Mammary epithelial cell (primary cell): ENCODE measurements at regions of chr14 and their contacts with region 1.

Region 1: DNA sequence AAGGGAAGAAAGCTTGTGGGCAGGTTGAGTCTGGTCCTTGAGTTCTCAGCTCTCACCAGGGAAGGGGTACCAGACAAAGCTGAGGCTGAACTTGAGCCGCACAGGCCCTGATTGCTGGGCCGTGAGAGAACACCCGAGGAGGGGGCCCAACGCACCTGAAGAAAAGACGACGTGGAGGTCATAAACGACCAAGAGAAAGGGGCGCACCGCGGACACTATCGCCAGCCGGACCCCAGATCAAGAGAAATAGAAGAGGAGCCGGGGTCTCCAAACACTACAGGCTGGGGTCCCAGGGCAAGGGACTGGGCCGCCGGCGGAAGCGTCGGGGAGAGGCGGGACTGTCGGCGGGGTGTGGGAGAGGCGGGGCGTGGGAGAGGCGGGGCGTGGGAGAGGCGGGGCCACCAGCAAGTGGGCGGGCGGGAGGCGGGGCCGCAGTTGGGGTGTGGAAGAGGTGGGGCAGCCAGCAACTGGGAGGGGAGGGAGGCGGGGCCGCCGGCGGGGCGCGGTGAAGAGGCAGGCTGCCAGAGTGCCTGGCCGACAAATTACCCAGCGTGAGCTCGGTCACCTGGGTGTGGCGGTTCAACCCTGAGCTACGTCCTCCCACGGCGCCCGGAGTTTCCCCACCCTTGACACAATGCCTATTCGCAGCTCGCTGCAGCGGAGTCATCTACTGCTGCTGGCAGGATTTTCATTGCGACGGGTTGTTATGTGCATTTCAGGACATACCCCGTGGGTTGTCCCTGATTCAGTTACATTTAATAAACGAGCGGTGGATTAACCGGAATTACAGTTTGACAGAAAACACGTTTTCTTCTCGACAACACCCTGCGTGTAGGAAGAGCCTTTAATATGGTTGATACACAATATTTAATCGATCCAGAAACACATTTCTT is 15.5 kb upstream of the NEMF start:
- DNase-seq: peak; percentile 97
- H3K4me3 ChIP-seq: peak overlapping the region; percentile 59 to 70 (median 60)
- H3K27ac ChIP-seq: peak overlapping the region; percentile 81
- H3K4me1 ChIP-seq: peaks cover 17% of the 10 kb centered on the region
- H3K27me3 ChIP-seq: no peaks in the 10 kb centered on the region
- CTCF ChIP-seq: no peak

Region 2: GRCh38 chr14:49820176-49820575 is 47.9 kb before region 1 on chr14:
- CTCF ChIA-PET with region 1: no interaction called
- dilution Hi-C with region 1: no loop called
- in situ Hi-C with region 1: no loop called
- intact Hi-C with region 1: no loop called
- DNase-seq: no peak
- H3K4me3 ChIP-seq: no peak overlapping the region
- H3K27ac ChIP-seq: no peak overlapping the region
- H3K4me1 ChIP-seq: no peaks in the 10 kb centered on the region
- H3K27me3 ChIP-seq: no peaks in the 10 kb centered on the region
- CTCF ChIP-seq: no peak

Region 3: DNA sequence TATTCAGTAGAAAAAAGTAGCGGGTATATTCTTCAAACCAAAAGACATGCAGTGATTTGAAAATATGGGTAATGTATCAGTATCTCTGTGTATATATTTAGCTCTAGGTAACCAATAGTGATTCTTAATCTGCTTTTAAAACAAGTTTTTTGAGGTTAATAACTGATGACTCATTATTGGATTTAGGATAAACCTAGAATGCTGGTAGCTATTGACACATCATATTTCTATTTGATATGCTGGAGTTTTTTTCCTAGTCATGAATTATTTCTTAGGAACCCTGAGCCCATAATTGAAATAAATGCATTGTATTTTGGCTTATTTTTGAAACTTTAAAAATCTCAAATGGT is 40.3 kb after region 1 on chr14:
- CTCF ChIA-PET with region 1: no interaction called
- dilution Hi-C with region 1: loop called (anchors 5 kb)
- in situ Hi-C with region 1: no loop called
- intact Hi-C with region 1: no loop called
- DNase-seq: peak; percentile 65
- H3K4me3 ChIP-seq: no peak overlapping the region
- H3K27ac ChIP-seq: peak overlapping the region; percentile 94
- H3K4me1 ChIP-seq: peaks cover 34% of the 10 kb centered on the region
- H3K27me3 ChIP-seq: no peaks in the 10 kb centered on the region
- CTCF ChIP-seq: no peak

Region 4: GRCh38 chr14:49946320-49947141 is 78.5 kb after region 1 on chr14:
- CTCF ChIA-PET with region 1: no interaction called
- dilution Hi-C with region 1: loop called (anchors 5 kb)
- in situ Hi-C with region 1: no loop called
- intact Hi-C with region 1: loop called (anchors 1 kb)
- DNase-seq: peak; percentile 72
- H3K4me3 ChIP-seq: no peak overlapping the region
- H3K27ac ChIP-seq: no peak overlapping the region
- H3K4me1 ChIP-seq: peaks cover 30% of the 10 kb centered on the region
- H3K27me3 ChIP-seq: no peaks in the 10 kb centered on the region
- CTCF ChIP-seq: no peak

Region 5: GRCh38 chr14:50008562-50009350 is 140.7 kb after region 1 on chr14:
- CTCF ChIA-PET with region 1: no interaction called
- dilution Hi-C with region 1: no loop called
- in situ Hi-C with region 1: loop called in 1 of 2 experiments (anchors 5 kb)
- intact Hi-C with region 1: loop called (anchors 1 kb)
- DNase-seq: peak; percentile 94
- H3K4me3 ChIP-seq: no peak overlapping the region
- H3K27ac ChIP-seq: peak overlapping the region; percentile 96
- H3K4me1 ChIP-seq: peaks cover 55% of the 10 kb centered on the region
- H3K27me3 ChIP-seq: no peaks in the 10 kb centered on the region
- CTCF ChIP-seq: no peak

Region 6: GRCh38 chr14:50038398-50039119 is 170.5 kb after region 1 on chr14:
- CTCF ChIA-PET with region 1: no interaction called
- dilution Hi-C with region 1: no loop called
- in situ Hi-C with region 1: no loop called
- intact Hi-C with region 1: loop called (anchors 1 kb)
- DNase-seq: peak; percentile 100
- H3K4me3 ChIP-seq: no peak overlapping the region
- H3K27ac ChIP-seq: peak overlapping the region; percentile 97
- H3K4me1 ChIP-seq: peaks cover 58% of the 10 kb centered on the region
- H3K27me3 ChIP-seq: no peaks in the 10 kb centered on the region
- CTCF ChIP-seq: peak; percentile 8 to 16

Region 7: DNA sequence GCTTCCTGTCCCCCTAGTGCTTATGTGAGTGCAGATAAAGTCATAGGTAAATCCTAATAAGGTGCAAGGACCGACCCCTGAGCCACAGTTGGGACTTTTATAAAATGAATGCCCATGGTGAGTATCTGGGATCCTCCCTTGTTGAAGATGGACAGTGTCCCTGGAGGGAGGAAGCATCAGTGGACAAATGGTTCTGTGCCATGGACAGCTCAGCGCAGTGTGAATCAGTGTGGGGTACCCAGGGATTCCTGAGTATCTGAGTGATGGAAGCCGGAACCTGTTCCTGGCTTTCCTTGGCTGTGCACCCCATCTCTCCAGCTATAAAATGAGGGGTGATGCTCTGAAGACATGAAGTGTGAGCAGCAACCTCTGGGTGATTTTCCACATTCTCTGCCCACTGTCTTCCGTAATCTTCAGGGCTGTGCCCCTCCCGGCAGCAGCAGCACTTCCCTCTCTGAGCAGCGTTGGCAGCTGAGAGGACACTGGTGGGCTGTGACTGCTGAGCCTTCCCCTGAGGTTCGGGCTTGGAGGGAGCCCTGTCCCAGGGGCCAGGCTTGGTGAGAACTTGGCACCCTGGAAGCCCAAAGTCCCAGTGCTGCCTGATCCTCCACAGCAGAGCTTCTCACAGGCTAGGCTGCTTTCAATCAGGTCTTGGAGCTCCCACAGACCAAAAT is 223.3 kb after region 1 on chr14:
- CTCF ChIA-PET with region 1: no interaction called
- dilution Hi-C with region 1: no loop called
- in situ Hi-C with region 1: loop called (anchors 5 to 10 kb)
- intact Hi-C with region 1: no loop called
- DNase-seq: no peak
- H3K4me3 ChIP-seq: no peak overlapping the region
- H3K27ac ChIP-seq: no peak overlapping the region
- H3K4me1 ChIP-seq: no peaks in the 10 kb centered on the region
- H3K27me3 ChIP-seq: no peaks in the 10 kb centered on the region
- CTCF ChIP-seq: no peak

Region 8: GRCh38 chr14:50109342-50109741 is 241.3 kb after region 1 on chr14:
- CTCF ChIA-PET with region 1: no interaction called
- dilution Hi-C with region 1: loop called (anchors 5 kb)
- in situ Hi-C with region 1: no loop called
- intact Hi-C with region 1: loop called (anchors 1 kb)
- DNase-seq: no peak
- H3K4me3 ChIP-seq: no peak overlapping the region
- H3K27ac ChIP-seq: no peak overlapping the region
- H3K4me1 ChIP-seq: peaks cover under 1% of the 10 kb centered on the region
- H3K27me3 ChIP-seq: no peaks in the 10 kb centered on the region
- CTCF ChIP-seq: peak; percentile 16 to 19